GM12878 (cell line): ENCODE measurements at regions of chr1 and their contacts with region 1.

Region 1: DNA sequence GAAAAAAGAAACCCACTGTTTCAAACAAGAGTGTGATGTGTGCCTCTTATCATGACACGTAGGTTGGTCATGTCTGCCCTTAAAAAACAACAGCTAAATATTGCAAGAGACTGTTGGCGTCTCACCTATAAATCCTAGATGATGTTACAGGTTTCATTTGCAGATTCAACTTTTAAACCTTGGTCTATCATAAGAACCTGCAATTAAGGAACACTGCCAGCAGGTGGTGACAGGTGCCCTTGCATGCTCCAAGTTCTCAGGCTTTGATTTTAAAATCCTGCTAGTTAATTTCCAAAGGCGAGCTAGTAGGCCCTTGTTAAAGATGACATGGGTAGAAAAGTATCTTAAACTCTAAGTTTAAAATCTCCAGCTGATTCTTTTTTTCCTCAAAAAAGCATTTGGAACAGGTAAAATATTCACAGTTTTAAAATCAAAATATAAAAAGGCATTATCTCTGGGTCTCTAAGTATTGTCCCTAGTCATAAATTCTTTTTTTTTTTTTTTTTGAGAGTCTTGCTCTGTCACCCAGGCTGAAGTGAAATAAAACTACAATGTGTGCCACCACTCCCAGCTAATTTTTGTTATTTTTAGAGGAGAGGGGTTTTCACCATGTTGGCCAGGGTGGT is 39.1 kb downstream of the CLSTN1 start:
- DNase-seq: peak; percentile 61
- ATAC-seq: peak; percentile 28
- H3K4me3 ChIP-seq: peak overlapping the region; percentile 4; the same call in 1 of the 2 replicates
- H3K27ac ChIP-seq: peak overlapping the region; percentile 69
- H3K4me1 ChIP-seq: peaks cover 46% of the 10 kb centered on the region
- H3K27me3 ChIP-seq: no peaks in the 10 kb centered on the region
- CTCF ChIP-seq: peak; percentile 79 to 92 (median 86)
- EP300 ChIP-seq: no peak
- POLR2A ChIP-seq: no peak
- RAD21 ChIP-seq: peak; percentile 96

Region 2: DNA sequence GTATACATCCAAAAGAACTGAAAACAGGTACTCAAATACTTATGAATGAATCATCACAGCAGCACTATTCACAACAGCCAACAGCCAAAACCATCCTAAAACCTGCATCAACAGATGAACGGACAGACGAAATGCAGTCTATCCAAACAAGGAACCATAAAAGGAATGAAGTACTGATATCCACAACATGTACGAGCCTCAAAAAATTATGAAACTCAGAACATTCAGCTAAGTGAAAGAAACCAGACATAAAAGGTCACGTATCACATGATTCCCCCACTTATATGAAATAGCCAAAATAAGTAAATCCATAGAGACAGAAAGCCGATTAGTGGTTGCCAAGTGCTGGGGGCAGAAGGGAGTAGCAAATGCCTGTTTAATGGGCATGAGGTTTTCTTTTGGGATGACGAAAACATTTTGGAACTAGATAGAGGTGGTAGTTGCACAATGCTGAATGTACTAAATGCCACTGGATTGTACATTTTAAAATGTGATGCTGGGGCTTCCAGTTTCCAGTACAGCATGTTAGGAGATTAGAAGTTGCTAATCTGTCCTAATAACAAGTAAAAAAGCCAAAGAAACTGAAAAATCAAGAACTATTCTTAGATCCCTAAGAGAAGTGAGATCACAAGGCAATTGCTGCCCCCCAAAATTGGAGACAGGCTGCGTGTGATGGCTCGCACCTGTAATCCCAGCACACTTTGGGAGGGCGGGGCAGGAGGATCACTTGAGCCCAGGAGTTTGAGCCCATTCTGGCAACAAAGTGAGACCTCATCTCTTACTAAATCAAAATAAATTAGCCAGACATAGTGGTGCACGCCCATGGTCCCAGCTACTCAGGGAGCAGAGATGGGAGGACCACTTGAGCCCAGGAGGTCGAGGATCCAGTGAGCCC is 13.9 kb after region 1 on chr1:
- CTCF ChIA-PET with region 1: interaction called, 18 read pairs
- POLR2A ChIA-PET with region 1: interaction called, 3 read pairs
- RAD21 ChIA-PET with region 1: interaction called, 5 read pairs
- SMC1A ChIA-PET with region 1: interaction called, 19 read pairs
- in situ Hi-C with region 1: no loop called
- intact Hi-C with region 1: no loop called
- DNase-seq: no peak
- ATAC-seq: no peak
- H3K4me3 ChIP-seq: no peak overlapping the region
- H3K27ac ChIP-seq: no peak overlapping the region
- H3K4me1 ChIP-seq: peaks cover 11% of the 10 kb centered on the region; the same call in 1 of the 2 replicates
- H3K27me3 ChIP-seq: no peaks in the 10 kb centered on the region
- CTCF ChIP-seq: no peak
- EP300 ChIP-seq: no peak
- POLR2A ChIP-seq: no peak
- RAD21 ChIP-seq: no peak

Region 3: GRCh38 chr1:9861360-9861759 is 76.7 kb after region 1 on chr1:
- CTCF ChIA-PET with region 1: interaction called, 562 read pairs
- POLR2A ChIA-PET with region 1: interaction called, 9 read pairs
- RAD21 ChIA-PET with region 1: interaction called, 174 read pairs
- SMC1A ChIA-PET with region 1: interaction called, 428 read pairs
- in situ Hi-C with region 1: loop called (anchors 5 kb)
- intact Hi-C with region 1: no loop called
- DNase-seq: no peak
- ATAC-seq: no peak
- H3K4me3 ChIP-seq: no peak overlapping the region
- H3K27ac ChIP-seq: no peak overlapping the region
- H3K4me1 ChIP-seq: peaks cover 32% of the 10 kb centered on the region
- H3K27me3 ChIP-seq: no peaks in the 10 kb centered on the region
- CTCF ChIP-seq: no peak
- EP300 ChIP-seq: no peak
- POLR2A ChIP-seq: no peak
- RAD21 ChIP-seq: no peak

Region 4: DNA sequence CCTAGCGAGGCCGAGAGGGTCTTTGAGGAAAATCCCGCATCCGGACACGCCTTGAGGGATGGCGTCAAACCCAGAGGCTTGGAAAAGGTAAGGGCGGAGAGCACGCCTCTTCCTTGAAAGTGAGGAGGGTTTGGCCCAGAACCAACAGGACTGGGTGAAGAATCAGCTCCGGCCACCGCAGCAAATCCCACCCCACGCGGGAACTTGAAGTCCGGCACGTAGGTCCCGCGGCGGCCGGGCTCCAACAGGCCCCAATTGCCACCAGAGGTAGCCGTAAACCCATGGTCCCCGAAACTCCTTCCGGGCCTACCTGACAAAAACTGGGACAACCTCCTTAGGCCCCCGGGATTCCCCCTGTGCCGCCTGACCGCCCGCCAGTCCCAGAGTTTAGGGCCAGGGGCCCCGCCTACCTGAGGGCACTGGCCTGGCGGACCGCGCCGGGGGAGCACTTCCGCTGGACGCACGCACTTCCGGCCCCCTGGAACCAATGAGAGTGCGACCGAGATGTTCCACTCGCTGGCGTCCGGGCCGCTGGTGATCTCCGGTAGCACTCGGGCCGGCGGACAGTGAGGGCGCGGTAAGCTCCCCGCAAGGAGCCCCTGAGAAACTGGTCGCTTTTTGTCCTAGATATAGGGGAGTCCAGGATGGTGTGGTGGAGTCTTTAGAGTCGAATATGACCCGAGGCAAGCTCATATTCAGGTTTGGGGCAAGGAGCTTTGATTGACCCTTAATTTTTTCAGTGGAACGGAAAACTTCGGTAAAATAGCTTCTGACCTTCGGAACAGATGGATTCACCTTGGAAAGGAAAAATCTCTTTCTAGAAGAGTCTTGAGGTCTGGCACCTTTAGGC is 158.5 kb after region 1 on chr1 and contains the starts of genes LZIC and NMNAT1:
- CTCF ChIA-PET with region 1: interaction called, 21 read pairs
- POLR2A ChIA-PET with region 1: no interaction called
- RAD21 ChIA-PET with region 1: interaction called, 6 read pairs
- SMC1A ChIA-PET with region 1: interaction called, 4 read pairs
- in situ Hi-C with region 1: no loop called
- intact Hi-C with region 1: loop called (anchors 1 kb)
- DNase-seq: peak; percentile 77
- ATAC-seq: peak; percentile 97
- H3K4me3 ChIP-seq: peak within 1 kb of the TSS; percentile 98
- H3K27ac ChIP-seq: peak within 1 kb of the TSS; percentile 93
- H3K4me1 ChIP-seq: peaks cover 6% of the 10 kb centered on the region; the same call in 1 of the 2 replicates
- H3K27me3 ChIP-seq: no peaks in the 10 kb centered on the region
- CTCF ChIP-seq: peak in 1 of 3 experiments; percentile 29; a peak in 1 of 6 replicates
- EP300 ChIP-seq: no peak
- POLR2A ChIP-seq: peak; percentile 95
- RAD21 ChIP-seq: peak; percentile 15; the same call in 1 of the 2 replicates
- polyA plus RNA-seq, gene LZIC: 21.8 to 24.9 TPM
- polyA plus RNA-seq, gene NMNAT1: 12.7 to 13.0 TPM